HEK293 (cell line): ENCODE measurements at regions of chrX and their contacts with region 1.

Region 1: DNA sequence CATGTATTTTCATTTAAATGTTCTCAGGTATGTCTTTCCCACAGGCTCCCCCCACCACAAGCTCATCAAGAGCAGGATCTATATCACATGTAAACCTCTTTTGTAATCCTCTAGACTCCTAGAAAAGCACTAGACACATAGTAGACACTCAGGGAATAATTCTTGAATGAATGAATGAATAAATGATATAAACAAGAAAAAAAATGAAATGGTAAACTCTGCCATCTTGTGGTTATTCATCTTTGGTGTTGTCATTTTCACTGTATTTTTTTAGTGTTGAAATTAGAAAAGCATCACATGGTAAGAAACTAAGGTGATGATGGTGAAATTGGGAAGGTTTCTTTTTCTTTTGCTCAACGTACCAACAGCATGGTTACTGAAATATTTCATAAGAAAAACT is 34.2 kb upstream of the C1GALT1C1 start:
- H3K4me3 ChIP-seq: no peak overlapping the region
- H3K27ac ChIP-seq: no peak overlapping the region
- H3K4me1 ChIP-seq: no peaks in the 10 kb centered on the region
- CTCF ChIP-seq: 0 out of 2 replicates have a peak, but pooled peaks have one; percentile 22

Region 2: DNA sequence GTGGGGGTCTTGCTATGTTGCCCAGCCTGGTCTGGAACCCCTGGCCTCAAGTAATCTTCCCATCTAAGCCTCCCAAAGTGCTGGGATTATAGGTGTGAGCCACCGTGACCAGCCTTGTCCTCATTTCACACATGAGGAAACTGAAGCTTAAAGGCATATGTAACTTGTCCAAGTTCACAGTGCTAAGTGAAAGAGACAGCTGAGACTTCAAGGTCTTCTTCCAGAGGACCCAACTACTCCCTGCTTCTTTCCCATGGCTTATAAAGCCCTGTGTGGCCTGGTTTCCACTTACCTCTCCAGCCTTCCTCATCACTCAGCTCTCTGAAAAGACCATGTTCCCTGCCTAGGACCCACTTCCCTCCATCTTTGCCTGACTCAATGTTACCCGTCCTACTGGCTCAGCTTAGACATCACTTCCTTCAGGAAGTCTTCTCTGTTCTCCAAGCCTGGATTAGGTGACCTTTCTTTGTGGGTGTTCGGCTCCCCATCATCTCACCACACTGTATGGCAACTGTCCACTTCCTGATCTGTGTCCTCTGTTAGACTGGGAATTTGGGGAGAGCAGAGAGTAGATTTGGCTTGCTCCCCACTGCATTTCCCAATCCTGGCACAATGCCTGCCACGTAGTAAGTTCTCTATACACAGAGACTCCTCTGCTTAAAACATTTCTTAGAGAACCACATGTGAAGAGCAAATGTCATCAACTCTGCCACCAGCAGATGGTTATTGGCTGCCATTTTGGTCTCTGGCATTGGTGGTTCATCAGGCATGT is 164.6 kb before region 1 on chrX:
- CTCF ChIA-PET with region 1: interaction called, 20 read pairs
- POLR2A ChIA-PET with region 1: no interaction called
- H3K4me3 ChIP-seq: no peak overlapping the region
- H3K27ac ChIP-seq: no peak overlapping the region
- H3K4me1 ChIP-seq: no peaks in the 10 kb centered on the region
- CTCF ChIP-seq: no peak

Region 3: GRCh38 chrX:120781403-120781802 is 117.3 kb after region 1 on chrX:
- CTCF ChIA-PET with region 1: interaction called, 10 read pairs
- POLR2A ChIA-PET with region 1: no interaction called
- H3K4me3 ChIP-seq: no peak overlapping the region
- H3K27ac ChIP-seq: no peak overlapping the region
- H3K4me1 ChIP-seq: no peaks in the 10 kb centered on the region
- CTCF ChIP-seq: no peak